HEK293 (cell line): ENCODE measurements at regions of chr12 and their contacts with region 1.

Region 1: DNA sequence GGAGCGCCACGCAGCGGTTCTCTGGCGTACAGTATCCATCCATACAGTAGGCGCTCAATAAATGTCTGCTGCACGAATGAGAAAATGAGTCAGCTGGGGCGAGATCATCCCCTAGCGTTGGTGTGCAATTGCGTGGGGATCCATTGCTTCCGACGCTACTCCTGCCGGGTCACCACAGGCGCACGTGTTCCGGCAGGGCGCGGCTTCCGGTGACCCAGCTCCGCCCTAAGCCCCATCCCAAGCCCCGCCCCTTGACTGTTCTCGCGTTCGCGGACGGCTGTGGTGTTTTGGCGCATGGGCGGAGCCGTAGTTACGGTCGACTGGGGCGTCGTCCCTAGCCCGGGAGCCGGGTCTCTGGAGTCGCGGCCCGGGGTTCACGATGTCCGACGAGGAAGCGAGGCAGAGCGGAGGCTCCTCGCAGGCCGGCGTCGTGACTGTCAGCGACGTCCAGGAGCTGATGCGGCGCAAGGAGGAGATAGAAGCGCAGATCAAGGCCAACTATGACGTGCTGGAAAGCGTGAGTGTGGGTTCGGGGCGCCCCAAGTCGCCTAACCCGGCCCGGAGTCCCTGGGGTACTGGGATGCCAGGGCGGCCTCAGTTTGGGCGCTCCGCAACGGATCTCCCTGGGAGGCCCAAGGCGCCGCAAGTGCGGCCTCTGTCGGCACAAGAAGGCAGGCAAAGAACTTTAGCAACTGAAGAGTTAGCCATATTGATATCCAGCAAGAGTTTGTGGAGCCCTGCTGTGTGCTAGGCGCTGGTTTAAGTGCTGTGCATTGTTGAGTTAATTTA is at the start of gene PSMD9:
- H3K4me3 ChIP-seq: peak within 1 kb of the TSS; percentile 81
- H3K27ac ChIP-seq: peak within 1 kb of the TSS; percentile 84
- H3K4me1 ChIP-seq: peaks cover 9% of the 10 kb centered on the region; the same call in 1 of the 2 replicates
- CTCF ChIP-seq: peak; percentile 97

Region 2: DNA sequence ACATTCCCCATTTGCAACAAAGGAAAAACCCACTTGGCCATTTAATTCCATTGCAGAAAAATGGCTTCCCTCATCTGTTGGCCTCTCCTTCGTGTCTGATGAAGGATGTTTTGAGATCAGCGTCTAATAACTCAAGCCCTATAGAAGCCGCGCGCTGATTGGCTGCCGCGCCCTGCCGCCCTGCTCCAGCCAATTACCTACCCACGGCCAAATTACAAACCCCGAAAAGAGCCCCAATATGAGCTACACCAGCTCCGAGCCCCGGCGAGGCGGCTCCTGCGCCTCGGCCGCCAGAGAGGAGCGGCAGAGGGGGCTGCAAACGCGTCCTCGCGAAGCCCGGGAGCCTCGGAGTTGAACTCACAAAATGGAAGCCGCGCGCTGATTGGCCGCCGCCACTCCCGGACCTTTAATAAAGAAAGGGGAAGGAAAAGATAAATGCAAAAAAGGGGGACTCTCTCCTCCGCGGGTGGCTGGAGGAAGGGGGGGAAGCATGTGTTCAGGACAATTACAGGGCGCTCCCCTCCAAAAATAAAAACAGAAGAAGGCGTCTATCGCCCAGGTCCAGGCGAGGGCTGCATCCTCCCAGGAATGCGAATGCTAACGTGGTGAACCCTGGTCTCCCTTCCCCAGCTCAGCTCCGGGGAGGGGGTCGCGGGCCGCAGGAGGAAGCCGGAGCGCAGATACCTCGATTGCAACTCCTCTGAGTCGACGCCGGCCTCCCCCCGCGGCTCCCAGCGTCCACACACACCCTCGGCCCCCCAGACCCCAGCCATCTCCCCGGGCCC is 85.6 kb before region 1 on chr12:
- CTCF ChIA-PET with region 1: interaction called, 154 read pairs
- POLR2A ChIA-PET with region 1: interaction called, 12 read pairs
- H3K4me3 ChIP-seq: peak overlapping the region; percentile 71
- H3K27ac ChIP-seq: peak overlapping the region; percentile 100
- H3K4me1 ChIP-seq: peaks cover 18% of the 10 kb centered on the region
- CTCF ChIP-seq: peak; percentile 19; the same call in 1 of the 2 replicates

Region 3: DNA sequence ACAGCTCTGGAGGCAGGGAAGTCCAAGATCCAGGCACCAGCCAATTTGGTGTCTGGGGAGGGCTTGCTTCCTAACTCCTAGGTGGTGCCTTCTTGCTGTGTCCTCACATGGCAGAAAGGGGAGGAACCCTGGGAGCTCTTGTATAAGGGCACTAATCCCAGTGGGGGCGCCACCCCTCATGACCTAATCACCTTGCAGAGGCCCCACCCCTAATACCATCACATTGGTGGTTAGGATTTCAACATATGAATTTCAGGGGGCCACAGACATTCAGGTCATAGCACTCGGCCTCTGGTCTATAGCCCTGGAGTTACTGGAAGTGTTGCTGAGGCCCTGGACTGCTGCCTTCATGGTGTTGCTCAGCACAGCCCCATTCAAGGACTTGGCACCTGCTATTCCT is 14.5 kb after region 1 on chr12:
- CTCF ChIA-PET with region 1: interaction called, 4 read pairs
- POLR2A ChIA-PET with region 1: interaction called, 12 read pairs
- H3K4me3 ChIP-seq: no peak overlapping the region
- H3K27ac ChIP-seq: no peak overlapping the region
- H3K4me1 ChIP-seq: no peaks in the 10 kb centered on the region
- CTCF ChIP-seq: no peak

Region 4: DNA sequence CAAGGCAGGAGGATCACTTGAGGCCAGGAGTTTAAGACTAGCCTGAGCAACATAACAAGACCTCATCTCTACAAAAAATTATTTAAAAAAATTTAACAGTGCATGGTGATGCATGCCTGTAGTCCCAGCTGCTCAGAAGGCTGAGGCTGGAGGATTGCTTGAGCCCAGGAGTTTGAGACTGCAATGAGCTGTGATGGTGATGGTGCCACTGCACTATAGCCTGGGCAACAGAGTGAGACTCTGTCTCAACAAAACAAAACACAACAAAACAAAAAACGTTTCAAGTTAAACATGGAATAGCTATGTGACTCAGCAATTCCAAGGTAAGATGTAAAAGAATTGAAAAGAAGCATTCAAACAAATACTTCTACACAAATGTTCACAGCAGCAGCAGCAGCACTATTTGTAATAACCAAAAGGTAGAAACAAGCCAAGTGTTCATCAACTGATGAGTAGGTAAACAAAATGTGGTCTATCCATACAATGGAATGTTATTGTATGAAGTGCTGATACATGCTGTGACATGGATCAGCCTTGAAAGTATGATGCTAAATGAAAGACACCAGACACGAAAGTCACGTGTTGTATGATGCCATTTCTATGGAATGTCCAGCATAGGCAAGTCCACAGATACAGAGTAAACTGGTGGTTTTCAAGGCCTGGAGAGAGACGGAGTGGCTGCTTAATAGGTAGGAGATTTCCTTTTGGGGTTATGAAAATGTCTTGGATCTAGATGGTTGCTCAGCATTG is 61.2 kb after region 1 on chr12:
- CTCF ChIA-PET with region 1: no interaction called
- POLR2A ChIA-PET with region 1: no interaction called
- H3K4me3 ChIP-seq: no peak overlapping the region
- H3K27ac ChIP-seq: no peak overlapping the region
- H3K4me1 ChIP-seq: no peaks in the 10 kb centered on the region
- CTCF ChIP-seq: no peak

Region 5: GRCh38 chr12:122107261-122107660 is 218.6 kb after region 1 on chr12:
- CTCF ChIA-PET with region 1: no interaction called
- POLR2A ChIA-PET with region 1: no interaction called
- H3K4me3 ChIP-seq: no peak overlapping the region
- H3K27ac ChIP-seq: no peak overlapping the region
- H3K4me1 ChIP-seq: peaks cover 6% of the 10 kb centered on the region; the same call in 1 of the 2 replicates
- CTCF ChIP-seq: no peak